HEK293 (cell line): ENCODE measurements at regions of chr10 and their contacts with region 1.

Region 1: GRCh38 chr10:77428691-77429395 is 208.8 kb downstream of the KCNMA1 start:
- H3K4me3 ChIP-seq: no peak overlapping the region
- H3K27ac ChIP-seq: no peak overlapping the region
- H3K4me1 ChIP-seq: no peaks in the 10 kb centered on the region
- CTCF ChIP-seq: no peak

Region 2: GRCh38 chr10:77287647-77288120 is 141.2 kb before region 1 on chr10:
- CTCF ChIA-PET with region 1: no interaction called
- POLR2A ChIA-PET with region 1: no interaction called
- H3K4me3 ChIP-seq: no peak overlapping the region
- H3K27ac ChIP-seq: peak overlapping the region; percentile 63
- H3K4me1 ChIP-seq: peaks cover 48% of the 10 kb centered on the region
- CTCF ChIP-seq: no peak

Region 3: DNA sequence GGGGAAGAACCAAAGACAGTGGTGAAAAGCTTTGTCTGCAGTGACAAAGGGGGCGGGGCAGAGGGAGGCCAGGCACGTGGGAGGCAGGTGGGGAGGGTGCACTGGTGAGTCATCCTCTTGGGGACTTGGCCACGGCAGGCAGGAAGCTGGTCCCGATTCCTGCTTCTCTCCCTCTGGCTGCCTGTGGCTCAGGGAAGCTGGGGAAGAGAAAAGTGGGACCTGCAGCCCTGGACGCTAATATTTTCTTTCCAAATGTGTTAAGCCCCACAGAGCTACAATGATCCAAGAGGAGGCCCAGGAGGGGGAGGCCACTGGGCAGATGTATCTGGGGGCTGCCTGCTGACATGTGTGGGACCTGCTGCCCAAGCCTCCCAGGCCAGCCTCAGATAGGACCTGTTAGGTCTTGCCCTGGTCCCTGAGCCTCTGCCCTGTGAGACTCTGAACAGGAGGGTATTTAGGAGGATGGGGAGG is 23.0 kb before region 1 on chr10:
- CTCF ChIA-PET with region 1: interaction called, 21 read pairs
- POLR2A ChIA-PET with region 1: no interaction called
- H3K4me3 ChIP-seq: no peak overlapping the region
- H3K27ac ChIP-seq: peak overlapping the region; percentile 42
- H3K4me1 ChIP-seq: peaks cover 4% of the 10 kb centered on the region
- CTCF ChIP-seq: no peak

Region 4: GRCh38 chr10:77416311-77417135 is 12.3 kb before region 1 on chr10:
- CTCF ChIA-PET with region 1: interaction called, 11 read pairs
- POLR2A ChIA-PET with region 1: no interaction called
- H3K4me3 ChIP-seq: no peak overlapping the region
- H3K27ac ChIP-seq: no peak overlapping the region
- H3K4me1 ChIP-seq: no peaks in the 10 kb centered on the region
- CTCF ChIP-seq: no peak

Region 5: GRCh38 chr10:77513781-77514331 is 85.0 kb after region 1 on chr10:
- CTCF ChIA-PET with region 1: no interaction called
- POLR2A ChIA-PET with region 1: no interaction called
- H3K4me3 ChIP-seq: no peak overlapping the region
- H3K27ac ChIP-seq: no peak overlapping the region
- H3K4me1 ChIP-seq: no peaks in the 10 kb centered on the region
- CTCF ChIP-seq: no peak

Region 6: GRCh38 chr10:77537720-77538359 is 109.0 kb after region 1 on chr10:
- CTCF ChIA-PET with region 1: no interaction called
- POLR2A ChIA-PET with region 1: no interaction called
- H3K4me3 ChIP-seq: no peak overlapping the region
- H3K27ac ChIP-seq: no peak overlapping the region
- H3K4me1 ChIP-seq: peaks cover 7% of the 10 kb centered on the region
- CTCF ChIP-seq: no peak